Tibial artery (tissue), 4 donors: ENCODE measurements at regions of chr18 and their contacts with region 1.

Region 1: GRCh38 chr18:67628674-67629073 is 112.2 kb upstream of the DSEL start:
- DNase-seq: no peak
- H3K4me3 ChIP-seq: no peak overlapping the region
- H3K27ac ChIP-seq: no peak overlapping the region
- H3K4me1 ChIP-seq: no peaks in the 10 kb centered on the region
- H3K27me3 ChIP-seq: no peaks in the 10 kb centered on the region
- CTCF ChIP-seq: no peak

Region 2: GRCh38 chr18:67211646-67212045 is 417.0 kb before region 1 on chr18:
- intact Hi-C with region 1: loop called (anchors 5 kb)
- DNase-seq: no peak
- H3K4me3 ChIP-seq: no peak overlapping the region
- H3K27ac ChIP-seq: no peak overlapping the region
- H3K4me1 ChIP-seq: no peaks in the 10 kb centered on the region
- H3K27me3 ChIP-seq: no peaks in the 10 kb centered on the region
- CTCF ChIP-seq: no peak

Region 3: GRCh38 chr18:67432806-67433205 is 195.9 kb before region 1 on chr18:
- intact Hi-C with region 1: no loop called
- DNase-seq: no peak
- H3K4me3 ChIP-seq: no peak overlapping the region
- H3K27ac ChIP-seq: no peak overlapping the region
- H3K4me1 ChIP-seq: no peaks in the 10 kb centered on the region
- H3K27me3 ChIP-seq: no peaks in the 10 kb centered on the region
- CTCF ChIP-seq: no peak

Region 4: GRCh38 chr18:67456711-67457110 is 172.0 kb before region 1 on chr18:
- intact Hi-C with region 1: no loop called
- DNase-seq: no peak
- H3K4me3 ChIP-seq: no peak overlapping the region
- H3K27ac ChIP-seq: no peak overlapping the region
- H3K4me1 ChIP-seq: no peaks in the 10 kb centered on the region
- H3K27me3 ChIP-seq: no peaks in the 10 kb centered on the region
- CTCF ChIP-seq: no peak